ENCODE measurements at regions of chr14 and their contacts with region 1.

Region 1: DNA sequence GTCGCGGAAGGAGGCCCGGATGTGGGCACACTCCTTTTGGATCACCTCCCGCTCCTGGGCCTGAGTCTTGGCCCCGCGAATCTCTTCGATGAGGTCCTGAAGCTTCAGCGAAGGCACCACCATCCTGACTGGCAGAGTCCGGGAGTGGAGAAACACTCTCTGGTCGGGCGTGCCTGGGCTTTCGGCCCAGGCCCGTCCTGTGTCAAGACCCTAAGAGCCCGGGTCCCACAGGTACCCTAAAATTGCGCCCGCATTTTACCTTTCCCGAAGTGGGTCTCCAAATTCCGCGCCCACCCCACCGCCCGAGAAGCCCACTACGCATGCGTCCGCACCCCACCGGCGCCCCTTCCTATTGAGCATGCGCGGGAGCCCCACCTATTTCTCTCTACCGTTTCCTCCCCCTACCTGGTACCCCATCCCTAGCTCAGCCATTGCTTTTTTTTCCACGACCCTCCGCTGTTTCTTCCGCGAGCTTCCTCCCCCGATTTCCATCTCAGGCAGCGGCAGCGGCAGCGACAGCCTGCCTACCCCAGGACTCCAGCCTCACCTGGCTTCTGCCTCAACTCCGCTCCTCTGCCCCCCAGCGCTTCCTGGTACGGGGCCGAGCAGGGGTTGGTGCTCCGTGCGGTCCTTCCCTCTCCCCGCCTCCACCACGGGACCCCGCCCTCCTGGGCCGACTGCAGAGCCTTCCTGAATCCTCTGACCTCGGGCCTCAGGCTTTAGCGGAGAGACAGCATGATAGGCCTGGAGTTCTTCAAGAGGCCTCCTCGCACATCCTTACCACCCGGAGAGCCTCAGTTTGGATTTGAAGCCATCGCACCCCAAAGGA is at the start of gene AP1G2:
- DNase-seq: peak; percentile 97
- ATAC-seq: peak; percentile 86
- H3K4me3 ChIP-seq: peak within 1 kb of the TSS; percentile 68 to 88 (median 70)
- H3K27ac ChIP-seq: peak within 1 kb of the TSS; percentile 41
- H3K4me1 ChIP-seq: peaks cover 49% of the 10 kb centered on the region
- H3K27me3 ChIP-seq: peaks cover 0 to 8% of the 10 kb centered on the region in 2 experiments; a peak in 1 of 5 replicates
- CTCF ChIP-seq: peak; percentile 50
- EP300 ChIP-seq: peak in 1 of 2 experiments; percentile 54; a peak in 1 of 4 replicates
- POLR2A ChIP-seq: peak in 1 of 2 experiments; percentile 83; a peak in 2 of 4 replicates
- RAD21 ChIP-seq: no peak; the same call in 1 of the 2 replicates
- total RNA-seq, gene AP1G2: 39.4 and 96.9 TPM in 2 replicates

Region 2: GRCh38 chr14:22252686-22253085 is 1314.7 kb before region 1 on chr14:
- CTCF ChIA-PET with region 1: no interaction called
- POLR2A ChIA-PET with region 1: no interaction called
- in situ Hi-C with region 1: no loop called
- intact Hi-C with region 1: no loop called
- DNase-seq: no peak
- ATAC-seq: no peak
- H3K4me3 ChIP-seq: no peak overlapping the region
- H3K27ac ChIP-seq: no peak overlapping the region
- H3K4me1 ChIP-seq: no peaks in the 10 kb centered on the region
- H3K27me3 ChIP-seq: peaks cover 0 to 6% of the 10 kb centered on the region in 2 experiments; a peak in 1 of 5 replicates
- CTCF ChIP-seq: no peak
- EP300 ChIP-seq: no peak
- POLR2A ChIP-seq: no peak
- RAD21 ChIP-seq: no peak

Region 3: GRCh38 chr14:23327947-23328744 is 239.3 kb before region 1 on chr14:
- CTCF ChIA-PET with region 1: interaction called, 13 read pairs
- POLR2A ChIA-PET with region 1: interaction called, 5 read pairs
- in situ Hi-C with region 1: no loop called
- intact Hi-C with region 1: loop called (anchors 1 kb)
- DNase-seq: peak; percentile 89
- ATAC-seq: peak; percentile 75
- H3K4me3 ChIP-seq: no peak overlapping the region
- H3K27ac ChIP-seq: no peak overlapping the region
- H3K4me1 ChIP-seq: peaks cover 22% of the 10 kb centered on the region
- H3K27me3 ChIP-seq: peaks cover 0 to 20% of the 10 kb centered on the region in 2 experiments; a peak in 2 of 5 replicates
- CTCF ChIP-seq: peak; percentile 95
- EP300 ChIP-seq: no peak
- POLR2A ChIP-seq: no peak; a peak in 1 of 4 replicates
- RAD21 ChIP-seq: peak; percentile 90

Region 4: GRCh38 chr14:23478111-23478759 is 89.2 kb before region 1 on chr14:
- CTCF ChIA-PET with region 1: interaction called, 275 read pairs
- POLR2A ChIA-PET with region 1: interaction called, 16 read pairs
- in situ Hi-C with region 1: no loop called
- intact Hi-C with region 1: loop called (anchors 1 kb)
- DNase-seq: peak; percentile 77
- ATAC-seq: peak; percentile 33
- H3K4me3 ChIP-seq: no peak overlapping the region
- H3K27ac ChIP-seq: no peak overlapping the region
- H3K4me1 ChIP-seq: peaks cover 8% of the 10 kb centered on the region
- H3K27me3 ChIP-seq: no peaks in the 10 kb centered on the region
- CTCF ChIP-seq: peak; percentile 91
- EP300 ChIP-seq: no peak
- POLR2A ChIP-seq: no peak
- RAD21 ChIP-seq: peak; percentile 84

Region 5: DNA sequence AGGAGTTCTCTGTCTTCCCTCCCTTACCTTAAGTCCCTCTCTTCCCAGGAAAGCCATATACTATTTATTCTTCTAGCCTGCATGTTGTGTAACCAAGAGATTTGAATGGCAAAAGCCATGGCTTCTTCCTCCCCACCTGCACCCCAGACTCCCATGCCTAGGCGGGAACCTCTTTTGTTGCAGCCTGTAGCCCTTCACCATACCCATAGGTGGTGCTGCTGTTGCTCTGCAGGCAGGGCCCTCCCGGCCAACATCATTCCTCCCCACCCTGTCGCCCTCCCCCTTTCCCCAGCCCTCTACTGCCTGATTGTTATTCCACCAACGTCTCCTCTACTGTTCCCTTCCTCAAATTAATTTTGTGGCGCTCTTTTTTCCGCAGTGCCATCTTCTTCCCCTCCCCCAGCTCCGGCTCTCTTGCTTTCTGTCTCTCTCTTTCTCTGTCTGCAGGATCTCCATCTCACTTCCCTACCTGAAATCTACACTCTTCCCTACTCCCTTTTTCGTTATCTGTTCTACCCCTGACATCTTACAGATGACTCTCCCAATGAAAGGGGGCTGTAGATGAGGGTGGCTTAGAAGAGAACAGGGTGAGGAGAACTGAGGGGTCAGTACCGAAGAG is 84.1 kb before region 1 on chr14:
- CTCF ChIA-PET with region 1: interaction called, 275 read pairs
- POLR2A ChIA-PET with region 1: interaction called, 16 read pairs
- in situ Hi-C with region 1: no loop called
- intact Hi-C with region 1: loop called (anchors 1 kb)
- DNase-seq: peak; percentile 69
- ATAC-seq: peak; percentile 96
- H3K4me3 ChIP-seq: no peak overlapping the region
- H3K27ac ChIP-seq: no peak overlapping the region
- H3K4me1 ChIP-seq: peaks cover 6% of the 10 kb centered on the region
- H3K27me3 ChIP-seq: no peaks in the 10 kb centered on the region
- CTCF ChIP-seq: peak; percentile 84
- EP300 ChIP-seq: no peak
- POLR2A ChIP-seq: no peak
- RAD21 ChIP-seq: peak; percentile 80

Region 6: DNA sequence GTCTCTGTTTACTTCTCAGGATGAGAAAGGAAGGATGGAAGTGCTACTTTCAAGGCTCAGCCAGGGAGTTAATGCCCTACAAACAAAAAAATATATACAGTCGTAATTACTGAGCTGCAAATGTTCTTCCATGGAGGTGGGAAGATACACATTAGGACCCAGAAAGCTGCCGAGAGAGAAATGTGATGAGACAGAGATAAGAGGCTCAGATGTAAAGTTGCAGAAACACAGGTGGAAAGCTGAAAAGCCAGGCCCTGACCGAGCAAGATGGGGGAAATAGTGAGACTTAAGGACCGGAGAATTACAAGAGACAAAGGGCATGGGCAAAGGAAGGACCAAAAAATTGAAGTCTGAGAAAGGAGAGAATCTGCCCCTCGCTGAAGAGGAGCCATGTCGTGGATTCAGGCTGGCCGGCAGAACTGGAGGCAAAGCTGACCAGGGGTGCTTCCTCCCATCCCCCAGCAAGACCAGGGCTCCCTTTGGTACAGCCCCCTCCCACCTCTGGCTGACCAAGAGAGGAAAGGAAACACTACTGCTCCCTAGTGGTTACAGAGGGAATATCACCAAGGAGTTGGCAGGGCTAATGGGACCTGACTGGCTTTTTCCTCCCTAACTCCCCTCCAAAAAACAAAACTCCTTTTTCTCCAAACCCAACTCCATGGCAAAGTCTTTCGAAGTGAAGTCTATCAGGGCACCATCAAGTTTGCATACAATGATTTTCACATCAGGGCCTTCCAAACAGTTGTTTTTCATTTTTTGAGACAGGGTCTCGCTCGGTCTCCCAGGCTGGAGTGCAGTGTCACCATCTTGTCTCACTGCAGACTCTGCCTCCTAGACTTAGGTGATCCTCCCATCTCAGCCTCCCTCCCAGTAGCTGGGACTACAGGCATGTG is 27.9 kb before region 1 on chr14:
- CTCF ChIA-PET with region 1: interaction called, 12 read pairs
- POLR2A ChIA-PET with region 1: interaction called, 4 read pairs
- in situ Hi-C with region 1: no loop called
- intact Hi-C with region 1: no loop called
- DNase-seq: peak; percentile 86
- ATAC-seq: peak; percentile 85
- H3K4me3 ChIP-seq: no peak overlapping the region
- H3K27ac ChIP-seq: no peak overlapping the region
- H3K4me1 ChIP-seq: peaks cover 7% of the 10 kb centered on the region
- H3K27me3 ChIP-seq: no peaks in the 10 kb centered on the region
- CTCF ChIP-seq: peak; percentile 96
- EP300 ChIP-seq: no peak
- POLR2A ChIP-seq: no peak
- RAD21 ChIP-seq: peak; percentile 81

Region 7: DNA sequence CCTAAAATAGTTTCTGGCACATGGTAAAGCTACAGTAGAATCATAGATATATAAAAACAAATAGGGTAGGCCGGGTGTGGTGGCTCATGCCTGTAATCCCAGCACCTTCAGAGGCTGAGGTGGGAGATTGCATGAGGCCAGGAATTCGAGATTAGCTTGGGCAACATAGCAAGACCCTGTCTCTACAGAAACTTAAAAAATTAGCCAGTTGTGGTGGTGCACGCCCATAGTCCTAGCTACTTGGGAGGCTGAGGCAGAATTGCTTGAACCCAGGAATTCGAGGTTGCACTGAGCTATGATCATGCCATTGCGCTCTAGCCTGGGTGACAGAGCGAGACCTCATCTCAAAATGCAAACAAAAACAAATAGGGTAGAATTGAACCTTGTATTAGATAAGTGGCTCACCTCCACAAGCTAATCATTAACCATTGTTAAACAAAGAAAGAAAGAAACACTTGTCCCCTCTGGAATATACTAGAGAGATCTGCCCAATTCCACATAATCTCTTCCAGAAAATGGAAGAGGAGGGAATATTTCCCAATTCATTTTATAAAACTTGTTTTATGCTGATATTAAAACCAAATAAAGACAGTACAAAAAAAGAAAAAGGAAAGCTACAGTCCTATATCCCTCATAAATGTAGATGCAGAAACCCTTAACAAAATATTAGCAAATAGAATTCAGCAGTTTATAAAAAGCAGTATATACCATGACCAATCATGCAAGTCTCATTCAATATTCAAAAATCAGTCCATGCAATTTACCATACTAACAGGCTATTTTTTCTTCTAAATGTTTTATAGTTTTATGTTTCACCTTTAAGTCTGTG is 46.0 kb after region 1 on chr14:
- CTCF ChIA-PET with region 1: no interaction called
- POLR2A ChIA-PET with region 1: interaction called, 11 read pairs
- in situ Hi-C with region 1: no loop called
- intact Hi-C with region 1: no loop called
- DNase-seq: peak; percentile 100
- ATAC-seq: peak; percentile 70
- H3K4me3 ChIP-seq: peak overlapping the region in 2 of 3 experiments; percentile 9 to 26; a peak in 3 of 6 replicates
- H3K27ac ChIP-seq: peak overlapping the region; percentile 89
- H3K4me1 ChIP-seq: peaks cover 95% of the 10 kb centered on the region
- H3K27me3 ChIP-seq: no peaks in the 10 kb centered on the region
- CTCF ChIP-seq: no peak; the same call in 1 of the 2 replicates
- EP300 ChIP-seq: peak; percentile 46 to 95; a peak in 2 of 4 replicates
- POLR2A ChIP-seq: 0 out of 4 replicates have a peak, but pooled peaks have one; percentile 26 to 40
- RAD21 ChIP-seq: no peak; the same call in 1 of the 2 replicates

Region 8: DNA sequence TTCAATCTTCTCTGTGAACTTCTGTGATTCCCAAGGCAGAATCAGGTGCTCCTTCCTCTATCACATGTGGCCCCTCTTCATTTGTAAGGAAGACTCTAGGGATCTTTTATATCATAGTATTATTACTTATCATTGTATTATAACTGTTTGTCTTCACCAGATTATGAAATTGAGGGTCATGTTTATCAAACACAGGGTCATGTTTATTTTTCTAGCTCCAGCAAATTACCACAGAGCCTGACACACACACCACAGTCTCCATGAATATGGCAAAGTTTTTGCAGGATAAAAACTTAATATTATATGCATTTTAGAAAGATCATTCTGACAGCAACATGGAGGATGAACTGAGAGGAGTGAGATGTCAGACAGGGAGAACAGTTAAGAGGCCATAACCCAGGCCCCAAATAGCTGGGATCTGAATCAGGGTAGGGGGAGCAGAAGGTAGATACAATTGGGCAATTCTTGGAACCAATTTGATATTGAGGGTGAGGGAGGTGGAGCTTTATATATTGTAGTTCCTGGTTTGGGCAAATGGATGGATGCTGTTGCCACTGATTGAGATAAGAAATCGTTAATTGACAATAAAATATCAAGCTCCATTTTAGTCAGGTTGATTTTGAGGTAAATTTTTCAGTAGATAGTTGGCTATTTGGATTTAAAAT is 199.5 kb after region 1 on chr14:
- CTCF ChIA-PET with region 1: no interaction called
- POLR2A ChIA-PET with region 1: no interaction called
- in situ Hi-C with region 1: no loop called
- intact Hi-C with region 1: no loop called
- DNase-seq: no peak
- ATAC-seq: no peak
- H3K4me3 ChIP-seq: no peak overlapping the region
- H3K27ac ChIP-seq: no peak overlapping the region
- H3K4me1 ChIP-seq: no peaks in the 10 kb centered on the region
- H3K27me3 ChIP-seq: no peaks in the 10 kb centered on the region
- CTCF ChIP-seq: no peak
- EP300 ChIP-seq: no peak
- POLR2A ChIP-seq: no peak
- RAD21 ChIP-seq: no peak

Region 9: GRCh38 chr14:23877538-23878180 is 310.3 kb after region 1 on chr14:
- CTCF ChIA-PET with region 1: no interaction called
- POLR2A ChIA-PET with region 1: no interaction called
- in situ Hi-C with region 1: no loop called
- intact Hi-C with region 1: no loop called
- DNase-seq: no peak
- ATAC-seq: no peak
- H3K4me3 ChIP-seq: no peak overlapping the region
- H3K27ac ChIP-seq: no peak overlapping the region
- H3K4me1 ChIP-seq: peaks cover 11% of the 10 kb centered on the region
- H3K27me3 ChIP-seq: peaks cover 0 to 14% of the 10 kb centered on the region in 2 experiments; a peak in 2 of 5 replicates
- CTCF ChIP-seq: no peak
- EP300 ChIP-seq: no peak
- POLR2A ChIP-seq: no peak
- RAD21 ChIP-seq: no peak

Region 10: GRCh38 chr14:23910101-23910875 is 342.9 kb after region 1 on chr14:
- CTCF ChIA-PET with region 1: interaction called, 5 read pairs
- POLR2A ChIA-PET with region 1: no interaction called
- in situ Hi-C with region 1: no loop called
- intact Hi-C with region 1: loop called (anchors 5 kb)
- DNase-seq: peak; percentile 81
- ATAC-seq: peak; percentile 96
- H3K4me3 ChIP-seq: no peak overlapping the region
- H3K27ac ChIP-seq: no peak overlapping the region
- H3K4me1 ChIP-seq: no peaks in the 10 kb centered on the region
- H3K27me3 ChIP-seq: peaks cover 0 to 2% of the 10 kb centered on the region in 2 experiments; a peak in 1 of 5 replicates
- CTCF ChIP-seq: peak; percentile 98
- EP300 ChIP-seq: no peak
- POLR2A ChIP-seq: no peak
- RAD21 ChIP-seq: peak; percentile 97

Measured in HepG2 (cell line).